MCF 10A (cell line): ENCODE measurements at regions of chr1 and their contacts with region 1.

Region 1: DNA sequence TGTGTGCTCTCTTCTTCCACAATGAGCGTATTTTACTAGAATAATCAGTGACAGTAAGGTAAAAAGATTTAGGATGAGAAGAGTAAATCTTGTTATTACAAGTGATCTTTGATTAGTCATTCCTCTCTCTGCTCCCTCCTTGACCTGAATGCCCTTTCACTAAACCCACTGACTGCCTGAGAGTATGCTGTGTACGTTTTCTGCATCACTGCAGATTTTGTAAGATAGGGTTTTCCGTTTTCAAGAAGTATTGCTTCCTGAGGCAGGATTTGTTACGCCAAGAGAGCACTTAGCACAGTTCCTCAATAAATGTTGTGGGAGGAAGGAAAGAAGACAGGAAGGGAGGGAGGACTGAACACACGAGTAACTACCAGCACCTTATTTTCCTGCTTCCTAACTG is 7.7 kb upstream of the LAMB3 start:
- DNase-seq: peak; percentile 91
- H3K4me3 Mint-ChIP-seq: peak overlapping the region; percentile 4
- H3K27ac Mint-ChIP-seq: peak overlapping the region; percentile 99
- H3K4me1 Mint-ChIP-seq: peaks cover 66% of the 10 kb centered on the region
- H3K27me3 Mint-ChIP-seq: no peaks in the 10 kb centered on the region
- CTCF ChIP-seq: no peak

Region 2: GRCh38 chr1:209473025-209473424 is 186.9 kb before region 1 on chr1:
- CTCF ChIA-PET with region 1: no interaction called
- POLR2A ChIA-PET with region 1: no interaction called
- intact Hi-C with region 1: no loop called
- DNase-seq: no peak
- H3K4me3 Mint-ChIP-seq: no peak overlapping the region
- H3K27ac Mint-ChIP-seq: no peak overlapping the region
- H3K4me1 Mint-ChIP-seq: peaks cover 5% of the 10 kb centered on the region
- H3K27me3 Mint-ChIP-seq: no peaks in the 10 kb centered on the region
- CTCF ChIP-seq: no peak

Region 3: GRCh38 chr1:209505044-209505443 is 154.9 kb before region 1 on chr1:
- CTCF ChIA-PET with region 1: no interaction called
- POLR2A ChIA-PET with region 1: no interaction called
- intact Hi-C with region 1: no loop called
- DNase-seq: no peak
- H3K4me3 Mint-ChIP-seq: no peak overlapping the region
- H3K27ac Mint-ChIP-seq: no peak overlapping the region
- H3K4me1 Mint-ChIP-seq: no peaks in the 10 kb centered on the region
- H3K27me3 Mint-ChIP-seq: no peaks in the 10 kb centered on the region
- CTCF ChIP-seq: no peak

Region 4: GRCh38 chr1:209633335-209633997 is 26.4 kb before region 1 on chr1:
- CTCF ChIA-PET with region 1: interaction called, 17 read pairs
- POLR2A ChIA-PET with region 1: interaction called, 20 read pairs
- intact Hi-C with region 1: no loop called
- DNase-seq: no peak
- H3K4me3 Mint-ChIP-seq: no peak overlapping the region
- H3K27ac Mint-ChIP-seq: peak overlapping the region; percentile 83
- H3K4me1 Mint-ChIP-seq: peaks cover 47% of the 10 kb centered on the region
- H3K27me3 Mint-ChIP-seq: no peaks in the 10 kb centered on the region
- CTCF ChIP-seq: no peak

Region 5: DNA sequence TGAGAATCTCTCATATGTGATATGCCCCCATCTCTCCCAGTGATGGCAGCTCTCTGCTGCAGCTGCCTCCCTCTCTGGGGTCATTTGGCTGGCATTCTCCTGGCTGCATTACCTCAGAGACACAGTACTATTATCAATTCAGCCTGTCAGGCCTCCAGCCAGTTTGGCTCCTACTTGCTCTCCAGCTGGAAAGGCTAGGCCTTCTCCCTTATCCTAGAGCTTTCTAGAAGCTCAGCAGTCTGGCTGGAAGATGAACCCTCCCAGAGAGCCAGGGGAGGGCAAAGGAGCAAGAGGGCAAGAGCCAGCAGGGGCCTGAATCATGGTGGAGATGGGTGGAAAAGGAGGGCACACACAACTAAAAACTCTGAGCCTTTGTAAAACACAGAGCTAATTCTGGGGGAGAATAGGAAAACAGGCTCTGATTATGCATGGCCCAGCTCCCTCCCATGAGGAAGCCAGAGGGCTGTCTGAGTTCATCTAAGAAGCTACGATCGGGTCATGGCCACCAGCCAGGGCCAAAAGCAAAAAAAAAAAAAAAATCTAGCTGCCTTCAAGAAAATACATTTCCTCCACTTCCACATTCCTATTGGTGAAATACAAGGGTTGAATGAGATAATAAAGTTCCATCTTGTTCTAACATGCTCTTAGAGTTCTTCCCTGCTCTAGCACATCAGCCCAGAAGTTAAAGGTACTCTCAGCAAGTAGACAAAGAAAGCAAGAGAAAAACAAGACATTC is 16.5 kb before region 1 on chr1:
- CTCF ChIA-PET with region 1: interaction called, 69 read pairs
- POLR2A ChIA-PET with region 1: interaction called, 207 read pairs
- intact Hi-C with region 1: no loop called
- DNase-seq: peak; percentile 61
- H3K4me3 Mint-ChIP-seq: peak overlapping the region; percentile 24
- H3K27ac Mint-ChIP-seq: peak overlapping the region; percentile 68
- H3K4me1 Mint-ChIP-seq: peaks cover 69% of the 10 kb centered on the region
- H3K27me3 Mint-ChIP-seq: no peaks in the 10 kb centered on the region
- CTCF ChIP-seq: no peak

Region 6: DNA sequence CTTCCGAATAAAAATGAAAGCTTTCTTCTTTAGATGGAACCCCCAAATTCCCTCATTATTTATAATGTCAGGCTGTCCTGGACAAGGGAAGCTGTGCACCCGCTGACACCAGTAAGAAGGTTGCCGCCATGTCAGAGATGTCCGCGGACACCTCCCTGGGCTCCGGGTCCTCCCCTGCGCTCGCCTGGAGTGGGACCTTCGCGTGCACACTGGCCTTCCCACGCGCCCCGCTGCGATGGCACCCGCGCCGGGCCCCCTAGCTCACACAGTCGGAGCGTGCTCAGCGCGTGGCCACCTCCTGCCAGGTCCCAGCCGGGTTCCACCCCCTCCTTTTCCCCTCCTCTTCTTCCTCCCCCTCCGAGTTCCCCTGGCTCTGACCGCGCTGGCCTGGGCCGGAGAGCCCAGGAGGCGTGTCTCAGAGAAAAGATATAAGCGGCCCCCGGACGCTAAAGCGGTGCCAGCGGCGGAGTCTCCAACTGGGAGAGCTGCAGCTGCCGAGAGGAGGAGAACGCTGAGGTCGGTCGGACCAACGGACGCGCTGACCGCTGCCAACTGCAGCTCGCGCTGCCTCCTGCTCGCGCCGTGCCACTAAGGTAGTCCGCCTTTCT is 15.2 kb after region 1 on chr1 and contains the start of gene G0S2:
- CTCF ChIA-PET with region 1: interaction called, 564 read pairs
- POLR2A ChIA-PET with region 1: interaction called, 458 read pairs
- intact Hi-C with region 1: loop called (anchors 2 kb)
- DNase-seq: no peak
- H3K4me3 Mint-ChIP-seq: no peak within 1 kb of the TSS
- H3K27ac Mint-ChIP-seq: peak within 1 kb of the TSS; percentile 66
- H3K4me1 Mint-ChIP-seq: peaks cover 36% of the 10 kb centered on the region
- H3K27me3 Mint-ChIP-seq: no peaks in the 10 kb centered on the region
- CTCF ChIP-seq: no peak
- total RNA-seq, gene G0S2: not detected in 2 replicates

Region 7: GRCh38 chr1:209714338-209714737 is 54.4 kb after region 1 on chr1:
- CTCF ChIA-PET with region 1: no interaction called
- POLR2A ChIA-PET with region 1: no interaction called
- intact Hi-C with region 1: no loop called
- DNase-seq: no peak
- H3K4me3 Mint-ChIP-seq: no peak overlapping the region
- H3K27ac Mint-ChIP-seq: no peak overlapping the region
- H3K4me1 Mint-ChIP-seq: peaks cover 5% of the 10 kb centered on the region
- H3K27me3 Mint-ChIP-seq: no peaks in the 10 kb centered on the region
- CTCF ChIP-seq: no peak

Region 8: DNA sequence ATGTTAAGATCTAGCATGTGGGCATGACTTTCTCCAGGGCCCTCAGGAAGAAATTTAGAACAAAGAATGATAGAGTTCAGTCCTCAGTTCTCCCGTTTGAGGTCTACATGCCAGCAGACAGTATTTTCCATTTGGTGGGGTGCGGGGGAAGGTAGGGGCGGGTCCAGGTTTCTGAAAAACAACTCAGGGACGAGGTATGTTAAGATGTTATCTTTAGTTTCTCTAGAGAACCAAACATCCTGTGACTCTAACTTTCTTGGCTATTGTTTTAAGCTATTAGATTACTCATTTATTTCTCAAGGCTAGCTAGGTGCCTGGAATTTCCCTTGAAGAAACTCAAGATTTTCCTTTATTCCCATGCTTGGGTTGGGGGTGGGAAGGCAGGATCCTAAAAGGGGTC is 235.8 kb after region 1 on chr1:
- CTCF ChIA-PET with region 1: no interaction called
- POLR2A ChIA-PET with region 1: no interaction called
- intact Hi-C with region 1: no loop called
- DNase-seq: peak; percentile 82
- H3K4me3 Mint-ChIP-seq: no peak overlapping the region
- H3K27ac Mint-ChIP-seq: peak overlapping the region; percentile 93
- H3K4me1 Mint-ChIP-seq: peaks cover 50% of the 10 kb centered on the region
- H3K27me3 Mint-ChIP-seq: no peaks in the 10 kb centered on the region
- CTCF ChIP-seq: no peak